Head of caudate nucleus (tissue), 42 donors: ENCODE measurements at regions of chr14 and their contacts with region 1.

Region 1: DNA sequence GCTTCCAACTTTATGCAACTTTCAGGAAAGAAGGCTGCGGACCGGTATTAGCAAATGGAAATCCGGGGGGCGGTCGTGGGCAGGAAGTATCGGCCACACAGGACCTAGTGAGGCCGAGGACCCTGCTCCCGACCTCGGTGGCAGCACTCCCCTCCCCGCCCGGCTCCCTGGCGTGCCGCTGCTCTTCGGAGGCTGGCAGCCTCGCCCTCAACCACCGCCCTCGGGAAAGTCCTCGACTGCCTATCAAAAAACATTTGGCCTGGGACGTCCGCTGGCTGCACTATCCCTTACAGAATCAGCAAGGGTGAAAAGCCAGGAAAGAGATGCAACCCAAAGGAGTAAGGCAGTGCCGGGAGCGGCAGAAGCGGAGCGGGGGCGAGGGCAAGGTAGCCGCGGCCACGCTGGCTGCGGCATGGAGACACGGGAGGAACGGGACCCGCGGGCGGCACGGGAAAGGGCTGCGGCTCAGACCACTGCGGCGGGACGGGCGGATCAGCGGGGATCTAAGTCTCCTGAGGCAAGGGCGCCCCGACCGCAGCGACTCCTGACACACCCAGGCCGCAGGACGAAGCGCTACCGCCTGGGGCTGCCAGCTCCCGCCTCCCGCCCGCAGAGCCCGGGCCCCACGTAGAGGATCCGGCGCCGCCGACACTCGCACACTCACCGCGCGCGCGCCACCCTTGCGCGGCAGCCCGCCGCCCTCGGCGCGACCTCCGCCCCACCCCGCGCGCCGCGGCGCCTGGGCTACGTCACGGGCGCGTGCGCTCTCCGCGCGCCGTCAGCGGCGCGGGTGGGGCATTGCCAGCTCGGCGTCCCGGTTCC is at the starts of genes BBOF1 and ENTPD5:
- DNase-seq: peak; percentile 68 to 93 (median 89)

Region 2: DNA sequence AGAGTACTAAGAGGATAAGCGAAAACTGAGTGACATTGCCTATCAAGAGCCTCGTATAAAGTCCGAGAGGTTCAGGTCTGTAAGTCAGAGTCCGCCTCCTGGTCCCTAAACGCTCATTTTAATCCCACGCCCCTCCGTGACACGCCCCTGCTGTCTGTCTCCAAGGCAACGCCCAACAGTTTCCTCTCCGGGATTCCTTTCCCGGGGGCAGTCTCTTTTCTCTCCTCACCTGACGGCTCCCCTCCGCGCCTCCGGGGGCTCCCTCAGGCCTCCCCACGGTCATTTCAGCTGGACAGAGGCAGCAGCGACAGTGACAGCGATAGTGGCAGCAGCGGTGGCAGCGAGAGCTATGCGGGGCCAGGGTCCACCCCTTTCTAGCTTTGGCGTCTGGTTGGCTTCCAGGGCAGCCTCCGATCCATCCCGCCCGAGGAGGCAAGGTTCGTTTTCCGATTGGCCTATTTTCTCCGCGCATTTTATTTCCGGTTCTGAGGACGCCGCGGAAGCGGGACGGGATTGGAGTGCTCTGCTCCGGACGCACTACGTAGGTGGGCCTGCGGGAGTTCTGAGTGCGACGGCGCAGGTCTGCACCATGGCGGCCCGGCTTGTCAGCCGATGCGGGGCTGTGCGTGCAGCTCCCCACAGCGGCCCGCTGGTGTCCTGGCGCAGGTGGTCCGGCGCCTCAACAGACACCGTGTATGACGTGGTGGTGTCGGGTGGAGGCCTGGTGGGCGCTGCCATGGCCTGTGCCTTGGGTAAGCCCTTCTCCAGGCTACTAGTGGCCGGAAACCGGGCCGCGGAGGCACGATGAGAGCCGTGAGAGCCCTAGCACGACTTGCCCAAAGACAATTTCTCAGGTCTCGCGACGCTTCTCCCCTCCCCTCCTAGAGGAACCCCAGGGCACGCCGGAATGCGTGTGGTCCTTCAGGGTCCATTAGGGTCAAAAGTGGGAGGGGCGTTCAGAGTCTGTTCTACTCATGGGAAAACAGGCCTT is 68.8 kb before region 1 on chr14 and contains the starts of genes COQ6 and FAM161B:
- intact Hi-C with region 1: loop called (anchors 10 kb)
- DNase-seq: peak; percentile 86 to 98 (median 95)

Region 3: GRCh38 chr14:74126315-74126714 is 107.5 kb after region 1 on chr14:
- intact Hi-C with region 1: no loop called
- DNase-seq: no peak